MCF 10A (cell line): ENCODE measurements at regions of chr7 and their contacts with region 1.

Region 1: DNA sequence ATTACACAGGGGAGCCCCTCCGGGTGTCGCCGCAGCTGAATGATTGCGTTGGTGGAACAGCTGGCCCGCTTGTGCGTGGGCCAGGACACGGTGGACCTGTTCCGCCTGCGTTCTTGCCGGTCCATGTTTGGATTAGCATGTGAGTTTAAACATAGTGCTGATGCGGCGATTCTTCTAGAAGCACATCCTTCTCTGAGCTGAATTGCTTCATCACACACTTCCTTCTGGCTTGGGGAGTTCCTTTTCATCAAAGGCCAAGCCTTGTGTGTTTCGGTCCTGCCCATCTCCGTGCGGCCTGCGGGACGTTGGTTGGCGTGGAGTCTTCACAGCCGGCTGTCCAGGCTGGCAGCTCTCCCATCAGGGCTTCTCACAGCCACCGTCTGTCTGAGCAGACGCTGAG is 45.5 kb upstream of the SLC29A4 start:
- DNase-seq: no peak
- H3K4me3 Mint-ChIP-seq: no peak overlapping the region
- H3K27ac Mint-ChIP-seq: no peak overlapping the region
- H3K4me1 Mint-ChIP-seq: no peaks in the 10 kb centered on the region
- H3K27me3 Mint-ChIP-seq: peaks cover 5% of the 10 kb centered on the region
- CTCF ChIP-seq: no peak

Region 2: DNA sequence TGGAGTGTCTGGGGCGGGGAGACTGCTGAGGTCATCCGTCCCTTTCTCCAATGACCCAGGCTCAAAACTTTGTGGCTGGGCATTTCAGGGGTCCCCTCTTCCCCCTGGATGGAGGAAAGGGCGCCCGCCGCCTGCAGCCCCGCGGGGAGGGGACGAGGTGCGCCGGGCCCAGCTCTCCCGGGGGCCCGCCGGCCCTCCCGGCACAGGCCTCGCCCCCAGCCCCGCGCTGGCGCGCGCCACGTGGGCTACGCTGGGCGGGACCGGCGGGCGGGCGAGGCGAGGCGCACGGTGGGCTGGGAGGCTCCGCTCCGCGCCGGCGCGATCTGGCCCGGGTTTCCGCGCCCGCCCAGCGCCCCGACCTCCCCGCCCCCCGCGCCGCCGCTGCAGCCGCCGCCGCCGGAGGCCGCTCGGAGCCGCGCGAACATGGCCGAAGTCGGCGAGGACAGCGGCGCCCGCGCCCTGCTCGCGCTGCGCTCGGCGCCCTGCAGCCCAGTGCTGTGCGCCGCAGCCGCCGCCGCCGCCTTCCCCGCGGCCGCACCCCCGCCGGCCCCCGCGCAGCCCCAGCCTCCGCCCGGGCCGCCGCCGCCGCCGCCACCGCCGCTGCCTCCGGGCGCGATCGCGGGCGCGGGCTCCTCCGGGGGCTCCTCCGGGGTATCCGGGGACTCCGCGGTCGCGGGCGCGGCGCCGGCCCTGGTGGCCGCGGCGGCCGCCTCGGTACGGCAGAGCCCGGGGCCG is 555.2 kb before region 1 on chr7 and contains the start of gene FOXK1:
- CTCF ChIA-PET with region 1: no interaction called
- POLR2A ChIA-PET with region 1: no interaction called
- intact Hi-C with region 1: no loop called
- DNase-seq: peak; percentile 64
- H3K4me3 Mint-ChIP-seq: peak within 1 kb of the TSS; percentile 83
- H3K27ac Mint-ChIP-seq: peak within 1 kb of the TSS; percentile 96
- H3K4me1 Mint-ChIP-seq: peaks cover 19% of the 10 kb centered on the region
- H3K27me3 Mint-ChIP-seq: no peaks in the 10 kb centered on the region
- CTCF ChIP-seq: no peak
- total RNA-seq, gene FOXK1: 37.7 and 43.8 TPM in 2 replicates

Region 3: DNA sequence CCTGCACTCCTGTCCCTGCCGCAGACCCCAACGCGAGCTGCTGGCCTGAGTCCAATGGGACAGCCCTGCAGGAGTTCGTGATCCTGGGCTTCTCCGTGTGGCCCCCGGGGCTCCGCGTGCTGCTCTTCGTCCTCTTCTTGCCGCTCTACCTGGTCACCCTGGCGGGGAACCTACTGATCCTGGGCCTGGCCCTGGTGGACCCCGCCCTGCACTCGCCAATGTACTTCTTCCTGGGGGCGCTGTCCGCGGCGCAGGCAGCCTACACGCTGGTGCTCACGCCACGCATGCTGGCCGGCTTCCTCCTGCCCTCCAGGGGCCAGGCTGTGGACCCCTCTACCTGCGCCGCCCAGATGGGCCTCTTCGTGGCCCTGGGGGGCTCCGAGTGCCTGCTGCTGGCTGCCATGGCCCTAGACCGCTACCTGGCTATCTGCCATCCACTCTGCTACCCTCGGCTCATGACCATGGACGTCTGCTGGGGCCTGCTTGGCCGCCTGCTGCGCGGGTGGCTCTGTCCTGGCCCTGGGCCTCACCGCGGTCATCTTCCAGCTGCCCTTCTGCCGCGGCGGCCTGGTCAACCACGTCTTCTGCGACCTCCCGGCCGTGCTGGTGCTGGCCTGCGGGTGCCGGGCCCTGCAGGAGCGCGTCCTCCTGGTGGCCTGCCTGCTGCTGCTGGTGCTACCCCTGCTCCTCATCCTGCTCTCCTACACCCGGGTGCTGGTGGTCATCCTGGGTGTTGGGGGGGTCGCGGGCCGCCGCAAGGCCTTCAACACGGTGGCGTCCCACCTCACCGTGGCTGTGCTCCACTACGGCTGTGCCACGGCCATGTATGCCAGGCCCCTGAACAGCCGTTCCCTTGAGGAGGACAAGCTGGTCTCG is 120.0 kb before region 1 on chr7:
- CTCF ChIA-PET with region 1: no interaction called
- POLR2A ChIA-PET with region 1: no interaction called
- intact Hi-C with region 1: no loop called
- DNase-seq: no peak
- H3K4me3 Mint-ChIP-seq: no peak overlapping the region
- H3K27ac Mint-ChIP-seq: no peak overlapping the region
- H3K4me1 Mint-ChIP-seq: no peaks in the 10 kb centered on the region
- H3K27me3 Mint-ChIP-seq: peaks cover 14% of the 10 kb centered on the region
- CTCF ChIP-seq: no peak

Region 4: GRCh38 chr7:5248201-5248885 is 11.1 kb after region 1 on chr7:
- CTCF ChIA-PET with region 1: interaction called, 23 read pairs
- POLR2A ChIA-PET with region 1: no interaction called
- intact Hi-C with region 1: no loop called
- DNase-seq: no peak
- H3K4me3 Mint-ChIP-seq: no peak overlapping the region
- H3K27ac Mint-ChIP-seq: no peak overlapping the region
- H3K4me1 Mint-ChIP-seq: no peaks in the 10 kb centered on the region
- H3K27me3 Mint-ChIP-seq: no peaks in the 10 kb centered on the region
- CTCF ChIP-seq: no peak

Region 5: GRCh38 chr7:5255832-5256231 is 18.5 kb after region 1 on chr7:
- CTCF ChIA-PET with region 1: interaction called, 23 read pairs
- POLR2A ChIA-PET with region 1: no interaction called
- intact Hi-C with region 1: no loop called
- DNase-seq: peak; percentile 82
- H3K4me3 Mint-ChIP-seq: no peak overlapping the region
- H3K27ac Mint-ChIP-seq: peak overlapping the region; percentile 71
- H3K4me1 Mint-ChIP-seq: peaks cover 6% of the 10 kb centered on the region
- H3K27me3 Mint-ChIP-seq: no peaks in the 10 kb centered on the region
- CTCF ChIP-seq: no peak

Region 6: GRCh38 chr7:5284304-5285281 is 47.3 kb after region 1 on chr7:
- CTCF ChIA-PET with region 1: interaction called, 9 read pairs
- POLR2A ChIA-PET with region 1: no interaction called
- intact Hi-C with region 1: loop called (anchors 1 kb)
- DNase-seq: peak; percentile 45
- H3K4me3 Mint-ChIP-seq: no peak overlapping the region
- H3K27ac Mint-ChIP-seq: no peak overlapping the region
- H3K4me1 Mint-ChIP-seq: no peaks in the 10 kb centered on the region
- H3K27me3 Mint-ChIP-seq: no peaks in the 10 kb centered on the region
- CTCF ChIP-seq: no peak

Region 7: DNA sequence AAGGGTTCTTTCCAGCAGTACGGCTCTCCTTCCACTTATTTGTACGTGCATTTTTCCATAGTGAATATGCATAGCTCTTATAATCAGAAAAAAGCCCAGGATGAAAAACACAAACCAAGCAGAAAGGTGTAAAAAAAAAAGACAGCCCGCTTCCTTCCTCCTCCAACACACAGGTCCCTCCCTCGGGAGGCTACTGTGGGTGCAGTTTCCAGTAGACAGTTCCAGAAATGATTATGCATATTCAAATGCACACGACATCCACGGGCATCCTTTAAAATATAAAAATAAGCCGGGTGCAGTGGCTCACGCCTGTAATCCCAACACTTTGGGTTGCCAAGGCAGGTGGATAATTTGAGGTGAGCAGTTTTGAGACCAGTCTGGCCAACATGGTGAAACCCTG is 126.4 kb after region 1 on chr7:
- CTCF ChIA-PET with region 1: interaction called, 11 read pairs
- POLR2A ChIA-PET with region 1: no interaction called
- intact Hi-C with region 1: no loop called
- DNase-seq: no peak
- H3K4me3 Mint-ChIP-seq: no peak overlapping the region
- H3K27ac Mint-ChIP-seq: no peak overlapping the region
- H3K4me1 Mint-ChIP-seq: no peaks in the 10 kb centered on the region
- H3K27me3 Mint-ChIP-seq: no peaks in the 10 kb centered on the region
- CTCF ChIP-seq: no peak

Region 8: GRCh38 chr7:5396999-5397663 is 159.8 kb after region 1 on chr7:
- CTCF ChIA-PET with region 1: interaction called, 5 read pairs
- POLR2A ChIA-PET with region 1: interaction called, 4 read pairs
- intact Hi-C with region 1: loop called (anchors 1 kb)
- DNase-seq: peak; percentile 97
- H3K4me3 Mint-ChIP-seq: peak overlapping the region; percentile 69
- H3K27ac Mint-ChIP-seq: peak overlapping the region; percentile 86
- H3K4me1 Mint-ChIP-seq: peaks cover 13% of the 10 kb centered on the region
- H3K27me3 Mint-ChIP-seq: no peaks in the 10 kb centered on the region
- CTCF ChIP-seq: no peak

Region 9: GRCh38 chr7:5450549-5451372 is 213.5 kb after region 1 on chr7:
- CTCF ChIA-PET with region 1: interaction called, 18 read pairs
- POLR2A ChIA-PET with region 1: interaction called, 5 read pairs
- intact Hi-C with region 1: loop called (anchors 2 kb)
- DNase-seq: peak; percentile 46
- H3K4me3 Mint-ChIP-seq: no peak overlapping the region
- H3K27ac Mint-ChIP-seq: no peak overlapping the region
- H3K4me1 Mint-ChIP-seq: peaks cover 7% of the 10 kb centered on the region
- H3K27me3 Mint-ChIP-seq: no peaks in the 10 kb centered on the region
- CTCF ChIP-seq: peak; percentile 56